ENCODE measurements at regions of chr15 and their contacts with region 1.

Region 1: GRCh38 chr15:51737280-51738017 is at the start of gene LYSMD2:
- DNase-seq: peak; percentile 79
- H3K4me3 Mint-ChIP-seq: peak within 1 kb of the TSS; percentile 81
- H3K27ac Mint-ChIP-seq: peak within 1 kb of the TSS; percentile 85
- H3K4me1 Mint-ChIP-seq: peaks cover 55% of the 10 kb centered on the region
- H3K27me3 Mint-ChIP-seq: no peaks in the 10 kb centered on the region
- total RNA-seq, gene LYSMD2: 18.1 to 18.6 TPM

Region 2: DNA sequence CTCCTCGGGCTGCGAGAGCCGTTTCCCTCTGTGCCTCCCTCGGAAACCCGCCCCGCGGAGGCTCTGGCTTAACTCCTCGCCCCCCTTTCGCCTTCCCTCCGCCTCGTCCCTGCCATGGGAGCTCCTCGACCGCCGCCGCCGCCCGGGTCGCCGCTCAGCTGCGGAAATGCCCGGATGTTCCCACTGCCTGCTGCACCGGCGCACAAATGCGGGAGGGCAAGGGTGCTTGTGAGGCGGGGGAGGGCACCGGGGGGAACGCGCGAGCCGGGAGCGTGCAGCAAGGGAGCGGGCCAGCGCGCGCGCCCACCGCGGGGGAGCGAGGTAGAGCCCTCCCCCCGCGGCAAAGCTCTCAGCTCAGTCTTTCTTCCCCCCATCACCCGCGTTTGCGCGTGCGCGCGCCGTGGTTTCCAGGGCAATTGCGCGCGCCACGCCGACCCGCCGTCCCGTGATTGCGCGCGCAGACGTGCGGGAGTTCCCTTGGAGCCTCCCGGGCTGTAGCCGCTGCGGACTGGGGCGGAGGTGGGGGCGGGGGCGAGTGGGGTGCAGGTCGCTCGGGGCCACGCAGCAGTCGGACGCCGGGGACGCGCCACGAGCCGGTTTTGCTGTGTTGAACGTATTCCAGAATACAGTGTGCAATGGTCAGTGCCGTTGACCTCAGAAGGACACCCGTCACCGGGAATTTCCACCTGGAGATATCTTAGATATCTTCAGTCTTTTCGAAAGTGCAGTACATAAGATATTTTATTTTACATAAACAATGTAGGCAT is 114.7 kb before region 1 on chr15 and contains the start of gene DMXL2:
- CTCF ChIA-PET with region 1: no interaction called
- POLR2A ChIA-PET with region 1: interaction called, 9 read pairs
- intact Hi-C with region 1: loop called (anchors 10 kb)
- DNase-seq: peak; percentile 77
- H3K4me3 Mint-ChIP-seq: peak within 1 kb of the TSS; percentile 83
- H3K27ac Mint-ChIP-seq: no peak within 1 kb of the TSS
- H3K4me1 Mint-ChIP-seq: peaks cover 14% of the 10 kb centered on the region
- H3K27me3 Mint-ChIP-seq: peaks cover 16% of the 10 kb centered on the region
- total RNA-seq, gene DMXL2: 6.1 to 6.3 TPM

Region 3: DNA sequence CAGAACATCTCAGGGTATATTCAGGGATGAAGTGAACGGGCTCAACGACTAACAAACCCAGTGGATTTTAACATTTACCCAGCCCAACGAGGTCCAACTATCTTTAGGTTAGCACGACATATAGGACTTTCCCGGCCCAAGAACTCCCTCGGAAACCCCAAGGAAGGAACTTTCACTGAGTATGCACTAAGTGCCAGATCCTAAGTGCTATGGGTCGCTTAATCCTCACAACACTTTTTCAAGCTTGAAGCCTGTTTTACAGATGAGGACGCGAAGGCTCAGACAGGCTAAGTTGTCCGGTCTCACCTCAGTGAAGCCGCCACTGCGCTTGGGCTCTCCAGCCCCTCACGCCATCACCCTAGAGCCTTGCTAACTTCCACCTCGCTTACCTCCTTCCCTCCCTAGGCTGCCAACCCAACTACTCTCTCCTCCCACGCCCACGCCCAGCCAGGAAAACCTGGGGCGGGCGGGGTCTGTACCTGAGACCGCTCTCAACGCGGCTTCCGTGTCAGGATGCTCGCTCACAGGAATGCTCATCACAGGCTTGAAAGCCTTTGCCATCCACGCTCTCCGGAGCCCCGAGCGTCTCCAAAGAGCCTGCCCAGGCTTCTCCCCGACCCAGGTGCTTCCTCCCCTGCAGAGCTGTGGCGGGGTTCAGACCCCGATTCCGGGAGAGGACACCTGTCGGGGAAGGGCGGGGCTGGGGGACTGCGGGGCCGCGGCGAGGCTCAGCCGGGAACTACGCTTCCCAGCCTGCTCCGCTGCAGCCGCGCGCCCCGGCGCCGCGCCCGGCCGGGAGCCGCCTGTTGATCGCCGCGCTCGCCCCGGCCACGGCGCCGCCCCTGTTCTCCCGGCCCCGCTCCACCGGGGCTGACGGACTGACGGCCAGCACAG is 13.6 kb after region 1 on chr15 and contains the start of gene TMOD2:
- CTCF ChIA-PET with region 1: interaction called, 9 read pairs
- POLR2A ChIA-PET with region 1: interaction called, 7 read pairs
- intact Hi-C with region 1: loop called (anchors 1 kb)
- DNase-seq: peak; percentile 61
- H3K4me3 Mint-ChIP-seq: peak within 1 kb of the TSS; percentile 84
- H3K27ac Mint-ChIP-seq: no peak within 1 kb of the TSS
- H3K4me1 Mint-ChIP-seq: peaks cover 16% of the 10 kb centered on the region
- H3K27me3 Mint-ChIP-seq: peaks cover 1% of the 10 kb centered on the region
- total RNA-seq, gene TMOD2: 6.7 to 7.9 TPM

Region 4: DNA sequence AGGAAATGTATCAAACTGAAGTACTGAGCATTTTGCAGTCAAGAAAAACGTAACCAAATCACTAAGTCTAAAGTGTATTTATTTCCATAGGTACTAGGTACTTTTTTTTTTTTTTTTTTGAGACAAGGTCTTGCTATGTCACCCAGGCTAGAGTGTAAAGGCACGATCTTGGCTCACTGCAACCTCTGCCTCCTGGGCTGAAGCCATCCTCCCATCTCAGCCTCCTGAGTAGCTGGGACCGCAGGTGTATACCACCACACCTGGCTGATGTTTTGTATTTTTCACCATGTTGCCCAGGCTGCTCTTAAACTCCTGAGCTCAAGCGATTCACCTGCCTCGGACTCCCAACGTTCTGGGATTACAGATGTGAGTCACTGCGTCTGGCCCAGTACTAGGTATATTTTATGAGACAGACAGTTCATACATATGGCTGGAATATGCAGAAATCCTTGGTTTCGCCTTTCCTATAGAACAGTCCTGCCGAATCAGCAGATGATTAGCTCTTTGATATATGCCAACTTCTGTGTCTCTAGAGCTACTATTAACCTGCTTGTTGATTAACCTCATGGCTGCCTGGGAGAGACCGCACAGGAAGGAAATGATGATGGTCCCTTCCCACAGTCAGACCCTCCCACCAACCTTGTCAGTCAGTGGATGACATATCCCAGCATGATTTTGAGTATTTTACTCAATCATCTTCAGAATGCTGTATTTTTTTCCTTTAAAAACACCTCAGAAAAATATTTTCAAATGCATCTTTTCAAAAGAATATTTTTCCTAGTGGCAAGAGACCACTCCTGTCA is 124.3 kb after region 1 on chr15:
- CTCF ChIA-PET with region 1: no interaction called
- POLR2A ChIA-PET with region 1: no interaction called
- intact Hi-C with region 1: loop called (anchors 2 kb)
- DNase-seq: peak; percentile 79
- H3K4me3 Mint-ChIP-seq: peak overlapping the region; percentile 36
- H3K27ac Mint-ChIP-seq: peak overlapping the region; percentile 61
- H3K4me1 Mint-ChIP-seq: peaks cover 66% of the 10 kb centered on the region
- H3K27me3 Mint-ChIP-seq: no peaks in the 10 kb centered on the region

Region 5: DNA sequence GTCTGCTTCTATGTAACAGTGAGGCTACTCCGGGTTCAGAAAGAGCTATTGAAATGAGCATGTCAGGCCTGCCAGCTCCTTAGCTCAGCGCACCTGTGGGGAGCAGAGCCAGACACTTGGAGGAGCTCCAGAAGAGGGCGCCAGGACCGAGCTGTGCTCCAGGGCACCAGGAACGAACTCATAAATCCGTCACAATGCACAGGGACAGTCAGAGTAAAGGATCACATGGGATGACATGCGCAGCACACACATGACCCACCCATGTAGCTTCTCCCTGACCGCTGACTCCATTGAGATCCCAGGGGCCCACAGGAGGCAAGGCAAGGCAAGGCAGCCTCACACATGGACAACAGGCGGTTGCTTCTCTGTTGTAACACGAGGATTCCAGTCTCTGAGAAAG is 479.7 kb after region 1 on chr15:
- CTCF ChIA-PET with region 1: no interaction called
- POLR2A ChIA-PET with region 1: interaction called, 3 read pairs
- intact Hi-C with region 1: loop called (anchors 5 kb)
- DNase-seq: peak; percentile 55
- H3K4me3 Mint-ChIP-seq: no peak overlapping the region
- H3K27ac Mint-ChIP-seq: no peak overlapping the region
- H3K4me1 Mint-ChIP-seq: peaks cover 15% of the 10 kb centered on the region
- H3K27me3 Mint-ChIP-seq: no peaks in the 10 kb centered on the region